ENCODE measurements at regions of chr7 and their contacts with region 1.

Region 1: GRCh38 chr7:149873074-149873969 is at the start of gene ATP6V0E2:
- DNase-seq: peak; percentile 82 to 96 (median 90)
- ATAC-seq: peak; percentile 66
- H3K4me3 ChIP-seq: peak within 1 kb of the TSS; percentile 75
- H3K4me3 Mint-ChIP-seq: peak within 1 kb of the TSS; percentile 95
- H3K27ac ChIP-seq: peak within 1 kb of the TSS; percentile 37 to 77
- H3K27ac Mint-ChIP-seq: peak within 1 kb of the TSS; percentile 92
- H3K4me1 ChIP-seq: peaks cover 78% of the 10 kb centered on the region
- H3K4me1 Mint-ChIP-seq: peaks cover 80% of the 10 kb centered on the region
- H3K27me3 ChIP-seq: no peaks in the 10 kb centered on the region
- H3K27me3 Mint-ChIP-seq: no peaks in the 10 kb centered on the region
- CTCF ChIP-seq: no peak
- total RNA-seq, gene ATP6V0E2: 23.2 to 24.9 TPM

Region 2: DNA sequence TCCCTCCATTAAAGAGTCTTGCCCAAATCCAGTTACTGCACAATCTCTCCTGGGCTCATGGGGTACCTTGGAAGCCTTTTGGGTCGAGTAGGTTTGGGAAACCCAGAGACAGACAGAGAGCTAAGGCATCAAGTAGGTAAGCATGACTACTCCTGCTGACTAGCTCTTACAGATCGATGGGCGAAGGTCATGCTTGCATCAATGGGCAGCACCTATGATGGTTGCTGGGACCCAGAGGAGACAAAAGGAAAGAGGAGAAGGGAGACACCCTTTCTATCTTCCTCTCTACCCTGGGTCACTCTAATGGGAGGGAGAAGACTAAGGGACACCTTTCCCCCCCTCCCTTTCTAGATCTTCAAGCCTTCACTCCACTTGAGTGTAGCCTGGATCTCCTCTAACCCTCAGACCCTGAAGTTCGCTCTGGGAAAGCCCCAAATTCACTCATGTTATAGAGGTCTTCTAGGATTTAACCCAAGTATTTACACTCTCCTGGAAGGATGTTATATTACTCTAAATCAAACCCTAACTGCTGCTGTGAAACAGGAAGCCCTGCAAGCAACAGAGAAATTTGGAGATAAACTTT is 344.1 kb before region 1 on chr7:
- CTCF ChIA-PET with region 1: no interaction called
- POLR2A ChIA-PET with region 1: no interaction called
- intact Hi-C with region 1: no loop called
- DNase-seq: no peak
- ATAC-seq: no peak
- H3K4me3 ChIP-seq: no peak overlapping the region
- H3K4me3 Mint-ChIP-seq: no peak overlapping the region
- H3K27ac ChIP-seq: no peak overlapping the region
- H3K27ac Mint-ChIP-seq: no peak overlapping the region
- H3K4me1 ChIP-seq: no peaks in the 10 kb centered on the region
- H3K4me1 Mint-ChIP-seq: no peaks in the 10 kb centered on the region
- H3K27me3 ChIP-seq: no peaks in the 10 kb centered on the region
- H3K27me3 Mint-ChIP-seq: no peaks in the 10 kb centered on the region
- CTCF ChIP-seq: no peak

Region 3: GRCh38 chr7:149771721-149772240 is 101.5 kb before region 1 on chr7:
- CTCF ChIA-PET with region 1: no interaction called
- POLR2A ChIA-PET with region 1: interaction called, 3 read pairs
- intact Hi-C with region 1: loop called in 1 of 2 experiments (anchors 5 kb)
- DNase-seq: peak; percentile 73 to 93 (median 86)
- ATAC-seq: peak; percentile 87
- H3K4me3 ChIP-seq: peak overlapping the region; percentile 67
- H3K4me3 Mint-ChIP-seq: peak overlapping the region; percentile 84
- H3K27ac ChIP-seq: no peak overlapping the region
- H3K27ac Mint-ChIP-seq: no peak overlapping the region
- H3K4me1 ChIP-seq: peaks cover 31% of the 10 kb centered on the region
- H3K4me1 Mint-ChIP-seq: peaks cover 20% of the 10 kb centered on the region
- H3K27me3 ChIP-seq: no peaks in the 10 kb centered on the region
- H3K27me3 Mint-ChIP-seq: no peaks in the 10 kb centered on the region
- CTCF ChIP-seq: no peak

Region 4: DNA sequence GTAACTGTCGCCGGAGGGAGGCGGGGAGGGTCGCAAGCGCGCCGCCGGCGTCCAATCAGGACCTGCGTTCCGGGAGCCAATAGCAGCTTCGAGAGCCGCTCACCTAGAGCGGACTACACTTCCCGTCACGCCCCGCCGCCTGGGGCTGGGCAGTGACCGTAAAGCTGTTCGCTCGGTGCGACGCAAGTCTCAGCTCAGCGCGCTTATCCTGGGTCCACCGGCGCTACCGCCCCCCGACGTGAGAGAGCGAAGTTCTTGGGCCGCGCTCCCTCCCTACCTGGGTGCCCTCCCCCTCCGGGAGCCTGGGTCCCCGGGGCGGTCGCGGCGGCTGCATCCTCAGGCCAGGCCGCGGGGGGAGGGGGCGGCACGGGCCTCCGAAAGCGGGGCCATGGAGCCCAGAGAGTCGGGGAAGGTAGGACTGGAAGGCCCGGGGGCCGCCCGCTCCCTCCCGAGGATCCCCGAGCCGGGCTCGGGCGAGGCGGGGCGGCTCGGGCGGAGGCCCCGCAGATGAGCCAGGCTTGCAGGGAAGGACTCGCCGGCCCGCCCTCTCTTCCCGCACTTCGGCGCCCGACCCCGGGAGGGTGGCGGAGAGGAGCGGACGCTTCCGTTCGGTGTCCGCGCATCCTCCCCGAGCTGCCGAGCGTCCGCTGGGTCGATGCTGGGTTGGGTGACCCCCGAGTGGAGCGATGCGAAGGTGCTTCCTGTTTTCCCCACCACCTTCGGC is 34.9 kb before region 1 on chr7 and contains the start of gene ZNF862:
- CTCF ChIA-PET with region 1: interaction called, 7 read pairs
- POLR2A ChIA-PET with region 1: interaction called, 83 read pairs
- intact Hi-C with region 1: loop called (anchors 1 kb)
- DNase-seq: peak; percentile 90 to 99 (median 95)
- ATAC-seq: peak; percentile 97
- H3K4me3 ChIP-seq: peak within 1 kb of the TSS; percentile 86
- H3K4me3 Mint-ChIP-seq: peak within 1 kb of the TSS; percentile 98
- H3K27ac ChIP-seq: peak within 1 kb of the TSS; percentile 1 to 72
- H3K27ac Mint-ChIP-seq: peak within 1 kb of the TSS; percentile 84
- H3K4me1 ChIP-seq: peaks cover 17% of the 10 kb centered on the region
- H3K4me1 Mint-ChIP-seq: peaks cover 44% of the 10 kb centered on the region
- H3K27me3 ChIP-seq: no peaks in the 10 kb centered on the region
- H3K27me3 Mint-ChIP-seq: no peaks in the 10 kb centered on the region
- CTCF ChIP-seq: no peak
- total RNA-seq, gene ZNF862: 25.6 to 26.6 TPM

Region 5: GRCh38 chr7:149846436-149847046 is 26.8 kb before region 1 on chr7:
- CTCF ChIA-PET with region 1: no interaction called
- POLR2A ChIA-PET with region 1: interaction called, 17 read pairs
- intact Hi-C with region 1: no loop called
- DNase-seq: no peak
- ATAC-seq: no peak
- H3K4me3 ChIP-seq: no peak overlapping the region
- H3K4me3 Mint-ChIP-seq: no peak overlapping the region
- H3K27ac ChIP-seq: no peak overlapping the region
- H3K27ac Mint-ChIP-seq: no peak overlapping the region
- H3K4me1 ChIP-seq: peaks cover 10% of the 10 kb centered on the region
- H3K4me1 Mint-ChIP-seq: peaks cover 54% of the 10 kb centered on the region
- H3K27me3 ChIP-seq: no peaks in the 10 kb centered on the region
- H3K27me3 Mint-ChIP-seq: no peaks in the 10 kb centered on the region
- CTCF ChIP-seq: no peak

Region 6: DNA sequence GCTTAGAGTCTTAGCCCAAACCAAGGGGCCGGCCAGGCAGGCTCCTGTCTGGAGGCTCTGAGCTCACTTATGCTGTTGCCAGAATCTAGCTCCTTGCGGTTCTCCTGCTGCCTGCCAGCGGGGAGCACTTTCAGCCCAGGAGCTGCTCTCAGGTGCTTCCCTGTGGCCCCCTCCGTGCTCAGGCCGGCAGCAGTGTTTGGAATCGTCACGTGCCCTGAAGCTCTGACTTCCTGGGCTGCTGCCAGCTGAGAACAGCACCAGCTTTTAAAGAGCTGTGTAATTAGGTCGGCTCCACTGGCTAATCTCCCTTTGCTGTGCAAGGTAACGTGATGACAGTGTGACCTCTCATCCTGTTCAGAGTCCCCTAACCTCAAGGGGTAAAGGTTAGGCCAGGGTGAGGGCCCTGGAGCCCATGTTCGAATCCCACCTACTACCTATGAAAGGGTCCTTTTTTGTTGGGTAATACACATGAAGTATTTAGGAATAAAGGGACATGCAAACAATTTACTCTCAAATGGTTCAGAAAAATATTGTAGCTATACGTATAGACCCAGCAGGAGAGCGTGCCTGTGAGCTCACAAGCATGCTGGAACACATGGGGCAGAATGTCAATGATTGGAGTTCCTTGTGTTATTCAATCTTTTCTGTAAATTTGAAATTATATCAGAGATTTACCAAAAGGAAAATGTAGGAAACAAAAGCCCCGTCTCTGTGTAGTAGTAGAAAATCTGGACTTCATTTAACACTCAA is 18.5 kb before region 1 on chr7:
- CTCF ChIA-PET with region 1: no interaction called
- POLR2A ChIA-PET with region 1: interaction called, 17 read pairs
- intact Hi-C with region 1: loop called in 1 of 2 experiments (anchors 2 kb)
- DNase-seq: peak in 13 of 14 experiments; percentile 21 to 68 (median 48)
- ATAC-seq: peak; percentile 80
- H3K4me3 ChIP-seq: no peak overlapping the region
- H3K4me3 Mint-ChIP-seq: peak overlapping the region; percentile 8
- H3K27ac ChIP-seq: no peak overlapping the region
- H3K27ac Mint-ChIP-seq: peak overlapping the region; percentile 61
- H3K4me1 ChIP-seq: peaks cover 44% of the 10 kb centered on the region
- H3K4me1 Mint-ChIP-seq: peaks cover 62% of the 10 kb centered on the region
- H3K27me3 ChIP-seq: no peaks in the 10 kb centered on the region
- H3K27me3 Mint-ChIP-seq: no peaks in the 10 kb centered on the region
- CTCF ChIP-seq: no peak

Region 7: GRCh38 chr7:149861446-149862045 is 11.8 kb before region 1 on chr7:
- CTCF ChIA-PET with region 1: interaction called, 5 read pairs
- POLR2A ChIA-PET with region 1: interaction called, 12 read pairs
- intact Hi-C with region 1: loop called in 1 of 2 experiments (anchors 1 kb)
- DNase-seq: peak in 2 of 14 experiments; percentile 35 to 47
- ATAC-seq: no peak
- H3K4me3 ChIP-seq: no peak overlapping the region
- H3K4me3 Mint-ChIP-seq: no peak overlapping the region
- H3K27ac ChIP-seq: no peak overlapping the region
- H3K27ac Mint-ChIP-seq: no peak overlapping the region
- H3K4me1 ChIP-seq: peaks cover 72% of the 10 kb centered on the region
- H3K4me1 Mint-ChIP-seq: peaks cover 67% of the 10 kb centered on the region
- H3K27me3 ChIP-seq: no peaks in the 10 kb centered on the region
- H3K27me3 Mint-ChIP-seq: no peaks in the 10 kb centered on the region
- CTCF ChIP-seq: peak; percentile 33

Region 8: DNA sequence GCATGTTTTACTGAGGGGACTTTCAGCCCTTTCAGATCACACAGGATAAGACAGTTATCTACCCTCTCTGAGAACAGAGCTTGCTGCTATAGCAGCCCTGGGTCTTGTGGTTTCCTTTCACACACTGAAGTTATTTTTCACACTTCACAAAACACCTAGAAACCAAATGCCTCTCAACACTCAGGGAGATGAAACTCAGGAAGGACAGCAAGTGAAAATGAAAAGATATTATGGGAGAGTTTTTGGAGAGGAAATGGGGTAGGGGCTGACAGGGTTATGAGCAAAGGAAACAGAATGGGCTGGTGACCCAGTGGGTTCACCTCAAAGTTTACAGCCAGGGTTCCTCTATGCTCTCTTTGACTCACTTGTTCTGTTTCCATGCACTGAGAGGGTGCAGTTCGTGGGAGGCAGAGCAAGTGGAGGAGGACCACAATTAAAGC is 795.2 kb after region 1 on chr7:
- CTCF ChIA-PET with region 1: no interaction called
- POLR2A ChIA-PET with region 1: no interaction called
- intact Hi-C with region 1: no loop called
- DNase-seq: peak in 13 of 14 experiments; percentile 34 to 92 (median 51)
- ATAC-seq: peak; percentile 82
- H3K4me3 ChIP-seq: peak overlapping the region; percentile 4
- H3K4me3 Mint-ChIP-seq: peak overlapping the region; percentile 49
- H3K27ac ChIP-seq: peak overlapping the region; percentile 73 to 85
- H3K27ac Mint-ChIP-seq: peak overlapping the region; percentile 91
- H3K4me1 ChIP-seq: peaks cover 70% of the 10 kb centered on the region
- H3K4me1 Mint-ChIP-seq: peaks cover 94% of the 10 kb centered on the region
- H3K27me3 ChIP-seq: no peaks in the 10 kb centered on the region
- H3K27me3 Mint-ChIP-seq: no peaks in the 10 kb centered on the region
- CTCF ChIP-seq: no peak

Measured in CD4-positive, alpha-beta T cell (primary cell).